H1 (cell line): ENCODE measurements at regions of chr2 and their contacts with region 1.

Region 1: GRCh38 chr2:199581935-199582360 is 124.2 kb upstream of the SATB2 start:
- DNase-seq: no peak
- H3K4me3 ChIP-seq: peak overlapping the region; percentile 14 to 46 (median 22); a peak in 6 of 8 replicates
- H3K27ac ChIP-seq: no peak overlapping the region
- H3K4me1 ChIP-seq: peaks cover 3 to 9% (median 4%) of the 10 kb centered on the region in 4 experiments; a peak in 4 of 7 replicates
- H3K27me3 ChIP-seq: no peaks in the 10 kb centered on the region
- CTCF ChIP-seq: no peak
- EP300 ChIP-seq: no peak
- POLR2A ChIP-seq: no peak
- RAD21 ChIP-seq: no peak

Region 2: DNA sequence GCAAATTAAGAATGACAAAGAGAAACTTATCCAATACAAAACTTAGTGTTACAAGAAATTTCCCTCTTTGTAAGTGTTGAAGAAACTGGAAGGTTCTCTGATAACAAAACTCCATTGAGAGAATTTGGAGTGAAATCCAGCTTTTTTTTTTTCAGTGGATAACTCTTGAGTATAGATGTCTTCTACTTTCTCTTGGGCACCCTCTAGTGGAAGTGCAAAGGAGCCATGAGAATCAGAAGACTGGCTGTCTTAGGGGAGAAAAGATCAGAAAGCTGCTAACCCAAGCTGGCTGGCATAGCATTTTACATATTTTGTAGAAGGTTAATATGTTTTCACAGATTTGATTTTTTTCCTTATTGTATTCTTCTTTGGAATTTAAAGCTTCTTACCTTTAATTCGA is 14.6 kb after region 1 on chr2:
- CTCF ChIA-PET with region 1: interaction called, 31 read pairs
- POLR2A ChIA-PET with region 1: interaction called, 4 read pairs
- DNase-seq: no peak
- H3K4me3 ChIP-seq: no peak overlapping the region
- H3K27ac ChIP-seq: no peak overlapping the region
- H3K4me1 ChIP-seq: no peaks in the 10 kb centered on the region
- H3K27me3 ChIP-seq: no peaks in the 10 kb centered on the region
- CTCF ChIP-seq: peak in 2 of 3 experiments; percentile 51 to 59; a peak in 3 of 4 replicates
- EP300 ChIP-seq: no peak
- POLR2A ChIP-seq: no peak
- RAD21 ChIP-seq: peak; percentile 37 to 53; a peak in 3 of 4 replicates

Region 3: DNA sequence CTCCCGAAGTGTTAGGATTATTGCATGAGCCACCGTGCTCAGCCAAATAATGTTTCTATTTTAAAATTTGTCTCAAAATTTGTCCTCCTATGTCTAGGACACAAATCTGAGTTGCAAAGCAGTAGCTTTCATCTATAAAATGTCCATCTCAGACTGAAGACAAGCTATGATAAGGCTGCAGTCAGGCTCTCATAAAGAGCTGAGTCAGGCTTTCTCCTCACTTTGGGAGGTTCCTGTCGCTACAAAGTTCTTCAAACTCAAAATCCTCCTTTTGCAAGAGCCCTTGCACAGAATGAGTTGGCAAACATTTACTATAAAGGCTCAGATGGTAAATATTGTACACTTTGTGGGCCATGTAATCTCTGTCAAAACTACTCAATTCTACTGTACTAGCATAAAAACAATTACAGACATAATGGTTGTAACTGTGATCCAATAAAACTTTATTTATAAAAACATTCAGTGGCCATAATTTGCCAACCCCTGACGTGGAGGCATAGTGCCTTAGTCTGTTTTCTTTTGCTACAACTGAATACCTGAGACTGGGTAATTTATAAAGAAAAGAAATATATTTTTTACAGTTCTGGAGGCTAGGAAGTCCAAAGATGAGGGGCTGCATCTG is 30.7 kb after region 1 on chr2:
- CTCF ChIA-PET with region 1: no interaction called
- POLR2A ChIA-PET with region 1: no interaction called
- DNase-seq: no peak
- H3K4me3 ChIP-seq: no peak overlapping the region
- H3K27ac ChIP-seq: no peak overlapping the region
- H3K4me1 ChIP-seq: peaks cover 0 to 3% (median 2%) of the 10 kb centered on the region in 4 experiments; a peak in 3 of 7 replicates
- H3K27me3 ChIP-seq: no peaks in the 10 kb centered on the region; a peak in 1 of 7 replicates
- CTCF ChIP-seq: no peak
- EP300 ChIP-seq: no peak
- POLR2A ChIP-seq: no peak
- RAD21 ChIP-seq: no peak

Region 4: GRCh38 chr2:199791326-199791725 is 209.4 kb after region 1 on chr2:
- CTCF ChIA-PET with region 1: no interaction called
- POLR2A ChIA-PET with region 1: no interaction called
- DNase-seq: no peak
- H3K4me3 ChIP-seq: no peak overlapping the region
- H3K27ac ChIP-seq: no peak overlapping the region
- H3K4me1 ChIP-seq: peaks cover 0 to 15% (median 7%) of the 10 kb centered on the region in 4 experiments; a peak in 3 of 7 replicates
- H3K27me3 ChIP-seq: no peaks in the 10 kb centered on the region
- CTCF ChIP-seq: no peak
- EP300 ChIP-seq: no peak
- POLR2A ChIP-seq: no peak
- RAD21 ChIP-seq: no peak